Activated naive CD4-positive, alpha-beta T cell treated with anti-CD3 and anti-CD28 coated beads for 36 hours (primary cell): ENCODE measurements at regions of chr3 and their contacts with region 1.

Region 1: DNA sequence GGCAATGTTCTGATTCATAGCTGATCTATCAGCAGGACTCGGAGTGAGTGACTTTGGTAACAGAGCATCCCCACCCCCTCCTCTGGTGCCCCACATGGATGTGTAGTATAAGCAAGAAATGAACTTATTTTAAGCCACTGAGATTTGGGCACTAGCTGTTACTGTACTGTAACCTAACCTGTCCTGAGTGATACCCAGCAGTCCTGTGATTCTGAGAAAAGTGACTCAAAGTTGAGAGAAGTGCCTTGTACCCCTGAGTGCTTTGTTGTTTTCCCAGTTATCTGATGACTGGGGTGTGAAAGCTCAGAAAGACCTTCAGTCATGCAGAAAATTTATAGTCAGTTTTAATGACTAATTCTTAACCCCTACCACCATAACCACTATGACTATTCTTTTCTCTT is 439.9 kb upstream of the RBMS3 start:
- DNase-seq: peak; percentile 22
- H3K4me3 Mint-ChIP-seq: no peak overlapping the region
- H3K27ac Mint-ChIP-seq: no peak overlapping the region
- H3K4me1 Mint-ChIP-seq: peaks cover 5% of the 10 kb centered on the region
- H3K27me3 Mint-ChIP-seq: peaks cover 2% of the 10 kb centered on the region

Region 2: GRCh38 chr3:29026286-29026685 is 185.3 kb after region 1 on chr3:
- CTCF ChIA-PET with region 1: no interaction called
- intact Hi-C with region 1: loop called (anchors 2 kb)
- DNase-seq: no peak
- H3K4me3 Mint-ChIP-seq: no peak overlapping the region
- H3K27ac Mint-ChIP-seq: no peak overlapping the region
- H3K4me1 Mint-ChIP-seq: no peaks in the 10 kb centered on the region
- H3K27me3 Mint-ChIP-seq: no peaks in the 10 kb centered on the region